Dendritic cell treated with granulocyte-macrophage colony-stimulating factor and Interleukin-4, amounts not matched to agents 40 ng/mL and 50 ng/mL, for 4 days (primary cell): ENCODE measurements at regions of chr9 and their contacts with region 1.

Region 1: DNA sequence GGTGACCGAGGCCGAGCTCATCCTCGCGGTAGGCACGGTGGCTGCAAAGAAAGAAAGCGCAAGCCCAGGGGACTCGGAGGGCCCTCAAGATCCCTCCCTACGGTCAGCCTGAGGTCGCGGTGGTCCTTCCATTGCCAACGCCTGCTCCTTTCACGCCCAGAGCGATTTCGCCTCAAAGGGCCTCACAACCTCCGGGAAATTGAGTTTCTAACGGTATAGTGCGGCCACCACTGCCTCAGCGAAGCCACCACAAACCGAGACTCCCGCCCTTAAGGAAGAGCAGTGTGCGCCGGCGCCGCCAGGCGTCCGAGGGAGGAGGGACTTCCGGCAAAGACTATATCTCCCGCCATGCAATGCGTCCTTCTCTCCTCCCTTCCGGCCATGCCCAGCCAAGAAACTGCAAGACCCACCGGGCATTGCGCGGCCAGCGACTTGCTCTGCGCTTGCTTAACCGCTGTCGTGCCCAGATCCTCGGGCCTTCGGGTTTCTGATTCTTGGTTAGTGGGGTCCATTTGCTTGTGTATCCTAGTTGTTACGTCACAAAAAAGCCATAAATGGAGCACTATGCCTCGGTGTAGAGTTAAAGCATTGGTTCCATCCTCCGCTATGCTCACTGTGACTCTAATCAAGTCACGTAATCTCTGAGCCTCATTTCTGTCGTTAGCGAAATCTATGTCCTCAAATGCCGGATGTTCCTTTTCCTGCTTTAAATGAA is at the start of gene HAUS6:
- H3K4me3 Mint-ChIP-seq: peak within 1 kb of the TSS; percentile 90
- H3K27ac Mint-ChIP-seq: peak within 1 kb of the TSS; percentile 86
- H3K4me1 Mint-ChIP-seq: peaks cover 25% of the 10 kb centered on the region
- H3K27me3 Mint-ChIP-seq: no peaks in the 10 kb centered on the region

Region 2: GRCh38 chr9:19127881-19128500 is 25.2 kb after region 1 on chr9:
- intact Hi-C with region 1: loop called (anchors 1 kb)
- H3K4me3 Mint-ChIP-seq: peak overlapping the region; percentile 84
- H3K27ac Mint-ChIP-seq: peak overlapping the region; percentile 96
- H3K4me1 Mint-ChIP-seq: peaks cover 52% of the 10 kb centered on the region
- H3K27me3 Mint-ChIP-seq: no peaks in the 10 kb centered on the region

Region 3: GRCh38 chr9:19174127-19174912 is 71.5 kb after region 1 on chr9:
- intact Hi-C with region 1: loop called (anchors 1 kb)
- H3K4me3 Mint-ChIP-seq: peak overlapping the region; percentile 9
- H3K27ac Mint-ChIP-seq: peak overlapping the region; percentile 70
- H3K4me1 Mint-ChIP-seq: peaks cover 25% of the 10 kb centered on the region
- H3K27me3 Mint-ChIP-seq: no peaks in the 10 kb centered on the region